HCT116 (cell line): ENCODE measurements at regions of chr10 and their contacts with region 1.

Region 1: DNA sequence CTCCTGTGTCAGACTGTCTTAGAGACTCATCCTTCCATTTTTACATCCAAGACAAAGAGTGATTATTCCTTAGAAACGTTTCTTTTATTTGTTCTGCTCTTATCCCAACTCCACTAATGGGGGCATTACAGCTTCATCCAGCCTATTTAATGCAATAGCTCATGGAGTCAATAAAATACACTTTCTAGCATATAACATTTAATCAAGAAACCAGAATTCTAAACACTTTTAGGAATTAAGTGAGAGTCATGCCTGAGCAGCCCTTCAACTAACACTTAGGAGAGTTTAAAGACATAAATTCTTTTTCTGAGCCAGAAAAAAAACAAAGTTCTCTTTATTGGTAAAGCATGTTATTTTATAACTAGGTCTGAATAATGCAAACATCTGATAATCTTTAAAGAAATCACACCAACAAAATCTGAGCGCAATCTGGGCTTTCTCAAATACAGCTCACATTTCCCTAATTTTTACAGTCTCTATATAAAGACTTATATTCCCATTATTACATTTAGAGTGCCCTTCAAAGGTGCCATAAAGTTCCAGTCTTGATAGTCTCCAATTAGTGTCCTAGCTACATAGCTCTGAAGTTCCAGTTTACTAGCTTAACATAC is 361.7 kb upstream of the HPS1 start:
- DNase-seq: no peak
- ATAC-seq: no peak
- H3K4me3 ChIP-seq: no peak overlapping the region
- H3K27ac ChIP-seq: no peak overlapping the region
- H3K4me1 ChIP-seq: no peaks in the 10 kb centered on the region
- H3K27me3 ChIP-seq: no peaks in the 10 kb centered on the region; the same call in 1 of the 2 replicates
- CTCF ChIP-seq: no peak
- POLR2A ChIP-seq: no peak
- RAD21 ChIP-seq: no peak

Region 2: GRCh38 chr10:98107644-98108430 is 700.5 kb before region 1 on chr10:
- CTCF ChIA-PET with region 1: no interaction called
- POLR2A ChIA-PET with region 1: no interaction called
- RAD21 ChIA-PET with region 1: no interaction called
- intact Hi-C with region 1: no loop called
- DNase-seq: no peak
- ATAC-seq: no peak
- H3K4me3 ChIP-seq: no peak overlapping the region
- H3K27ac ChIP-seq: no peak overlapping the region
- H3K4me1 ChIP-seq: no peaks in the 10 kb centered on the region
- H3K27me3 ChIP-seq: peaks cover 86% of the 10 kb centered on the region
- CTCF ChIP-seq: no peak
- POLR2A ChIP-seq: no peak
- RAD21 ChIP-seq: peak; percentile 20; the same call in 1 of the 2 replicates

Region 3: DNA sequence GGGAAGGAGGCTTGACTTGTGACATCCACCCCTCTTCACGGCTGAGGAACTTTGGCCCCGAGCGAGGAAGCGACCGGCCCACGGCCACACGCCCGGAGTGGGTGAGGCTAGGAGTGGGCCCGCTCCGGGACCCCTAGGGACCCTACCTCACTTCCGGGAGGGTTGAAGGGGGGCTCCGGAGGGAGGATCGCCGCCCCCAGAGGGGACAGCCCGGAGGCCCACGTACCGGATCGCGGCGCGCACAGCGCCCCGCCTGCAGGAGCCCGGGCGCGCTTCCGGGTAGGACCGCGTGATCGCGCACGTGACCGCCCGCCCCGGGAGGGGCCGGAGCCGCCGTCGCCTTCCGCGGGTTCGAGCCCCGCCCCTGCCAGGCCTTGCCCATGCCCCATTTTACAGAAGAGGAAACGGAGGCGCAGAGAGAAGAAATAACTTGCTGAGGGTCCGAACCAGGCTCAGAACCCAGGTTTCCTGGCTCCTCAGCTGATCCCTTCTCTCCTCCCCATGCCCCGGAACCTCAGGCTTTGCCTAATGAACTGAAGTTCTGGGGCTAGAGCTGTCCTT is 361.6 kb before region 1 on chr10 and contains the start of gene HPS1:
- CTCF ChIA-PET with region 1: no interaction called
- POLR2A ChIA-PET with region 1: no interaction called
- RAD21 ChIA-PET with region 1: no interaction called
- intact Hi-C with region 1: no loop called
- DNase-seq: no peak
- ATAC-seq: peak; percentile 93
- H3K4me3 ChIP-seq: peak within 1 kb of the TSS; percentile 87 to 88
- H3K27ac ChIP-seq: peak within 1 kb of the TSS; percentile 49
- H3K4me1 ChIP-seq: peaks cover 6 to 23% of the 10 kb centered on the region in 2 experiments; a peak in 3 of 4 replicates
- H3K27me3 ChIP-seq: no peaks in the 10 kb centered on the region
- CTCF ChIP-seq: no peak
- POLR2A ChIP-seq: peak; percentile 80
- RAD21 ChIP-seq: no peak
- total RNA-seq, gene HPS1: 64.3 TPM

Region 4: DNA sequence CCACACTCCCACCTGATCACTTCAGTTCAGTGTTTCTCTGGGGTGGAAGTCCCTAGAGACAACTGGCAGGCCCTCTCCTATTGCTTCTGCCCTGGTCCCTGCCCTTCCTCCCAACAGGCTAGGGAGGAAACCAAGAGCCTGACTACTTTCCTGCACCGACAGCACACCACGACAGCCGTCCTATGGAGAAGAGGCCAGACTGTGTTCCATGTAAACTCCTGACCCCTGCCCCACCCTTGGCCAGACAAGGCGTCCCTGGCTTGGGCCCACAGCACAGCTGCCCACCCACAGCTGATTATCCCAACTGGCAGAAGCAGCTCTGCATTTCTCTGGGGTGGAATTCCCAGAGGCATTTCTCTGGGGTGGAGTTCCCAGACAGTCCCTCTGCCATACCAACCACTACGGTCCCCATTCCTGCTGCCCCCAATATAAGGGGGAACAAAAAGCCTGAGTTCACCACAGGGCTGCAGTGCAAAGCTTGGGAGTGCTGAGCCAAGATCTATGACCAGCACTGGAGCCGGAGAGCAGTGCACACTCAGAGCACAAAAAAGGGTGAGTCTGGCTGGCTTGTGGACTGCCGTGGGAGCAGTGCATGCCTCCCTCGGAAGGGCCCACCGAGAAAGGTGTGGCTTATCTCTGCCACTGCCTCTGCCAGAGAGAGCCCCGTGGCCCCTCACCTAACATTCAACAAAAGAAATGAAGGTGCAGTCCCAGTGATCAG is 233.8 kb after region 1 on chr10:
- CTCF ChIA-PET with region 1: no interaction called
- POLR2A ChIA-PET with region 1: no interaction called
- RAD21 ChIA-PET with region 1: no interaction called
- intact Hi-C with region 1: loop called (anchors 5 kb)
- DNase-seq: no peak
- ATAC-seq: peak; percentile 67
- H3K4me3 ChIP-seq: no peak overlapping the region
- H3K27ac ChIP-seq: no peak overlapping the region
- H3K4me1 ChIP-seq: no peaks in the 10 kb centered on the region
- H3K27me3 ChIP-seq: peaks cover 8% of the 10 kb centered on the region; the same call in 1 of the 2 replicates
- CTCF ChIP-seq: no peak
- POLR2A ChIP-seq: no peak
- RAD21 ChIP-seq: no peak